MCF 10A (cell line): ENCODE measurements at regions of chr2 and their contacts with region 1.

Region 1: GRCh38 chr2:202178342-202178958 is 59.9 kb downstream of the SUMO1 start:
- DNase-seq: peak; percentile 71
- H3K4me3 Mint-ChIP-seq: no peak overlapping the region
- H3K27ac Mint-ChIP-seq: no peak overlapping the region
- H3K4me1 Mint-ChIP-seq: no peaks in the 10 kb centered on the region
- H3K27me3 Mint-ChIP-seq: no peaks in the 10 kb centered on the region
- CTCF ChIP-seq: peak; percentile 74

Region 2: GRCh38 chr2:201795607-201796477 is 382.6 kb before region 1 on chr2:
- CTCF ChIA-PET with region 1: interaction called, 5 read pairs
- POLR2A ChIA-PET with region 1: interaction called, 4 read pairs
- intact Hi-C with region 1: loop called (anchors 1 kb)
- DNase-seq: peak; percentile 57
- H3K4me3 Mint-ChIP-seq: no peak overlapping the region
- H3K27ac Mint-ChIP-seq: no peak overlapping the region
- H3K4me1 Mint-ChIP-seq: peaks cover 12% of the 10 kb centered on the region
- H3K27me3 Mint-ChIP-seq: no peaks in the 10 kb centered on the region
- CTCF ChIP-seq: peak; percentile 74

Region 3: GRCh38 chr2:201854221-201854801 is 324.1 kb before region 1 on chr2:
- CTCF ChIA-PET with region 1: interaction called, 208 read pairs
- POLR2A ChIA-PET with region 1: interaction called, 12 read pairs
- intact Hi-C with region 1: no loop called
- DNase-seq: peak; percentile 78
- H3K4me3 Mint-ChIP-seq: no peak overlapping the region
- H3K27ac Mint-ChIP-seq: peak overlapping the region; percentile 49
- H3K4me1 Mint-ChIP-seq: peaks cover 17% of the 10 kb centered on the region
- H3K27me3 Mint-ChIP-seq: no peaks in the 10 kb centered on the region
- CTCF ChIP-seq: no peak

Region 4: DNA sequence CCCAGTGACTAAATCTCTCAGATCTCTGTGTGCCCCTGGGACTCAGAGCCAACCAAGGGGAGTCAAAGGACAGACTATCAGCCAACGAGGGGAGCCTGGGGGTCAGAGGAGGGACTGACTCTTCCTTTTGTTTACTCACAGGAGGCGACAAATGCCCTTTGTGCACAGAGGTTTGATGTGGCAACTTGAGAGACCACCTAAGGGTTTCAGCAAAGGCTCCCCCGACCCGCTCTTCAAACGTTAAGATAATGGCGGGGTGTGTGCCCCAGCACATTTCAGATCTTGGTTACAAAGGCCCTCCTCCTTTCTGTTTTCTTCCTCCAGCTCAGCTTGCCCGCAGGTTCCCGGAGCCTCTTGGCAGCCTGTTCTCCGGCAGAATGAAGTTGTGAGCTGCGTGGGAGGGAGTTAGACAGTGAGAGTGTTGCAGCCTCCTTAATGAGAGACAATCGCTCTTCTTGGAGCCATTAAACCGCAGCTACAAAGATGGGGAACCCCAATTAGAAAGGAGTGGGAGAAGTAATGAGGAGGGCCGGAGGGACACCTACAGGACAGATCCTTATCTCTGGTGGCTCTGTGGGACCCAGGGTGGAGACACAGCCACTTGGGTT is 29.2 kb before region 1 on chr2:
- CTCF ChIA-PET with region 1: interaction called, 10 read pairs
- POLR2A ChIA-PET with region 1: interaction called, 4 read pairs
- intact Hi-C with region 1: no loop called
- DNase-seq: no peak
- H3K4me3 Mint-ChIP-seq: no peak overlapping the region
- H3K27ac Mint-ChIP-seq: no peak overlapping the region
- H3K4me1 Mint-ChIP-seq: no peaks in the 10 kb centered on the region
- H3K27me3 Mint-ChIP-seq: peaks cover 12% of the 10 kb centered on the region
- CTCF ChIP-seq: no peak

Region 5: DNA sequence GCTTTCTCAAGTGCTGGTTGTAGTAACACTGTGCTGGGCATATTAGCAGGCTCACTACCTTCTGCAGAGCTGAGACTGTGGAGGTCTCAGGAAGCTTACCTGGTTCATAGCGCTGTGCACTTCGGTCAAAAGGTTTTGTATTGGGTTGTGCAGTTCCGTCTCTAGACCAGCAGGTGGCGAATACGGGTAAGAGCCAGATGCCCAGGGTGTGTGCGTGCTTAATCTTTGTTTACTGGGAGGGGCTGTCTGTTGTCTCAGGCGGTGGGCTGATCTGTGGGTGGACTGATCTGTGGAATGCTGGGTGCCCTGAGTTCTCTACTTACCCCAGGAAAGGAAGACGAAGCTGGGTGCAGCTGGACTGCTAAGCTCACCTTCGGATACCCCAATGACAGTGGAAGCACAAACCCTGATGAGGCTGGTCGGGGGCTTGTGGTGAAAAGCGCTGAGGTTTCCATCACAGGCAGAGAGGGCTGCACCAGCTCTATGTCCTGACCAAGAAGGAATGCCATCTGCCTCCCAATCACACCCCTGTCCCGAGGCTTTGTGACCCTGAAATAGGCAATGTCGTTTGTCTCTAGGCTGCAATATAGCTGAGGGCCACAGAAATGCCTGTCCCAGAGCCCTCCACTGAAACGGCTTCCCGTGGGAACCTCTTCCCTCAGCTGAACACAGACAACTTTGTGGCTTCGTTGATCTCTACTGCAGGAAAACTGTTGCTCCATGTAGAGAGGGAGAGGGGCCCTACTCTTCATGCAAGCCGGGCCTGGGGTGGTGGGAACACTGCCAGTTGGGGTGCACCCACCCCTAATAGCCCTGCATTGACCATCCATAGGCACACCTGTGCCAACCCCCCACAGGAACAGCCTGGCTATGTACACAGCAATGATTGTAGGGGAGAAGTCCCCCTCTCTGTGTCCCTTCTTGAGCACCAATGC is 410.5 kb after region 1 on chr2:
- CTCF ChIA-PET with region 1: no interaction called
- POLR2A ChIA-PET with region 1: no interaction called
- intact Hi-C with region 1: no loop called
- DNase-seq: peak; percentile 75
- H3K4me3 Mint-ChIP-seq: no peak overlapping the region
- H3K27ac Mint-ChIP-seq: no peak overlapping the region
- H3K4me1 Mint-ChIP-seq: peaks cover 7% of the 10 kb centered on the region
- H3K27me3 Mint-ChIP-seq: no peaks in the 10 kb centered on the region
- CTCF ChIP-seq: peak; percentile 96